Caco-2 (cell line): ENCODE measurements at regions of chr7 and their contacts with region 1.

Region 1: DNA sequence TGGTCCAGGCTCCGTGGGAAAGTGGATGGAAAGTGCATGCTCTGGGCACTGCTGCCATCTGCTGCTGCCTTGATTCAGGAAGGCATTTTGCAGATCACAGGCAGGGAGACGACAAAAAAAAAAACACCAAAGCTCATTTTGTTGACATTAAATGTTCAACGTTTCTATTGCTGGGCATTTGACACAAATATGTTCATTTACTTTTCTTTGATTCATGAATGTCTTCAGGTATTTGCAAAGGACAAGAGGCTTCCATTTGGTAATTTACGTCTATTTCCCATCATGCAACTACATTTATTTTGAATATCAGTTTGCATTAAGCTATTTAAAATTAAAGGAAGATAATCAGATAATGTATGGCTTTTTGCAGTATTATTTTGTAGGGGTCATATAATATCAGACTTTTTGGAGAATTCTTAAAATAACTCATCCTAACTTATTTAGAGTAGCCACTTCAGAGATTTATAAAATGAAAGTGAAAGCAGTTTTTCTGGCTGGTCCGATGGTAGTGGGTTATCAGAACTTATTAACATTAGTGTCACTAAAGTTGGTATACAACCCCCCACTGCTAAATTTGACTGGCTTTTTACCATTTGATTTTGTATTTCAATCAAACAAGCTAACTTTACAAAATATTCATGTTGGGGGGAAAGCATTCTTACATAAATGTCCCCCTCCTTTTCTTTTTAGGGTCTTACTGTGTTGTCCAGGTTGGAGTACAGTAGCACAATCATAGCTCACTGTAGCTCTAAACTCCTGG is 65.3 kb downstream of the PDIA4 start:
- DNase-seq: peak in 1 of 2 experiments; percentile 63
- H3K4me3 ChIP-seq: peak overlapping the region; percentile 67
- H3K4me3 Mint-ChIP-seq: peak overlapping the region; percentile 92
- H3K27ac Mint-ChIP-seq: peak overlapping the region; percentile 70
- H3K4me1 ChIP-seq: peaks cover 10% of the 10 kb centered on the region; the same call in 1 of the 2 replicates
- H3K4me1 Mint-ChIP-seq: peaks cover 18% of the 10 kb centered on the region
- H3K27me3 ChIP-seq: no peaks in the 10 kb centered on the region
- H3K27me3 Mint-ChIP-seq: no peaks in the 10 kb centered on the region
- CTCF ChIP-seq: peak; percentile 64 to 74

Region 2: DNA sequence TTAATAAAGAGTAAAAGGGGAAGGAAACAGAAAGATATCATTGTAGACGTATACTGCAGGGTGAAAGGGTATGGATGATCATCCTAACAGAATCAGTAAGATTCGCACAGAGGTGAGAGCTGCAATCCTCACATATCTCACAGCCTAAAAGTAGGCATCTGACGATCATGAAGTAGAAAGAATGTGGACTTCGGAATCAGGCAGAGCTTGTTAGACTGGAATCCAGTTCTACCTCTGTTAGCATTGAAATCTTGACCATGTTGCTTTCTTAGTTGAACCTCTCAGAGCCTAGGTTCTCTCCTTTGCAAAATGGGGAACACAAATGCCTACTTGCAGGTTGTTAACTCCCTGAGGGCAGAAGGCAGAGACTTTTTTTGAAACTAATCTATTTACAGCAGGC is 692.4 kb before region 1 on chr7:
- CTCF ChIA-PET with region 1: no interaction called
- POLR2A ChIA-PET with region 1: no interaction called
- intact Hi-C with region 1: loop called (anchors 5 kb)
- DNase-seq: peak; percentile 58 to 66
- H3K4me3 ChIP-seq: no peak overlapping the region
- H3K4me3 Mint-ChIP-seq: peak overlapping the region; percentile 49
- H3K27ac Mint-ChIP-seq: peak overlapping the region; percentile 54
- H3K4me1 ChIP-seq: peaks cover 30% of the 10 kb centered on the region
- H3K4me1 Mint-ChIP-seq: peaks cover 26% of the 10 kb centered on the region
- H3K27me3 ChIP-seq: no peaks in the 10 kb centered on the region
- H3K27me3 Mint-ChIP-seq: no peaks in the 10 kb centered on the region
- CTCF ChIP-seq: no peak

Region 3: DNA sequence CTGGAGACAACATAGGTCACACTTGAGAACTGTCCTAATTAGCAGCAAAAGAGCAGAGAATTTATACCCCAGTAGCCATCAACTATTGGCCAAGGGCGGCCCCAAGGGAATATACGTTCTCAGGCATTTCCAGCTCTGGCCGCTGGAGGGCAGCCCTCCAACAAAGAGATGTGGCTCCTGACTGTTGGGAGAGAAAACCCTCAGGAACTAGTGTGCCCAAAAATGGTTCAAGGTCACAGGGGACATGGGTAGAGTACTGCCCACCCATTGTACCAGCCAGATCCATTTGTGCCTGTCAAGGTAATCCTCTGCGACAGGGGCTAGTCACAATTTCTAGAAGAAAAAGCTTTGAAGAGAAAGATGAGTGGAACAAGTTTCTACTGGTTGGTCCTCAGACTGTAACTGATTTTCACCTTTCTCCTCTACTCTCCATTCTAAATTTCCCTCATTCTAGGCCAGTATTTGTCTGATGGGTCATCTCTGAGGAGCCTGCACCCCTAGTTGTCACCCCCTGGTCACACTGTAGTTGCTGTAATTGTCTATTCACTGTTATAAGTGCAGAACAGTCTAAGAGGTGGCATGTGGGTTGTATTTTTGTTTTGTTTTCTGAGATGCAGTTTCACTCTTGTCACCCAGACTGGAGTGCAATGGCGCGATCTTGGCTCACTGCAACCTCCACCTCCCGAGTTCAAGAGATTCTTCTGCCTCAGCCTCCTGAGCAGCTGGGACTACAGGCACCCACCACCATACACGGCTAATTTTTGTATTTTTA is 387.2 kb before region 1 on chr7:
- CTCF ChIA-PET with region 1: interaction called, 6 read pairs
- POLR2A ChIA-PET with region 1: no interaction called
- intact Hi-C with region 1: loop called (anchors 1 kb)
- DNase-seq: peak; percentile 61 to 76
- H3K4me3 ChIP-seq: no peak overlapping the region
- H3K4me3 Mint-ChIP-seq: no peak overlapping the region
- H3K27ac Mint-ChIP-seq: no peak overlapping the region
- H3K4me1 ChIP-seq: no peaks in the 10 kb centered on the region
- H3K4me1 Mint-ChIP-seq: no peaks in the 10 kb centered on the region
- H3K27me3 ChIP-seq: no peaks in the 10 kb centered on the region
- H3K27me3 Mint-ChIP-seq: peaks cover 3% of the 10 kb centered on the region
- CTCF ChIP-seq: peak; percentile 85 to 90

Region 4: GRCh38 chr7:148670807-148671206 is 292.2 kb before region 1 on chr7:
- CTCF ChIA-PET with region 1: no interaction called
- POLR2A ChIA-PET with region 1: no interaction called
- intact Hi-C with region 1: no loop called
- DNase-seq: no peak
- H3K4me3 ChIP-seq: no peak overlapping the region
- H3K4me3 Mint-ChIP-seq: no peak overlapping the region
- H3K27ac Mint-ChIP-seq: no peak overlapping the region
- H3K4me1 ChIP-seq: no peaks in the 10 kb centered on the region
- H3K4me1 Mint-ChIP-seq: no peaks in the 10 kb centered on the region
- H3K27me3 ChIP-seq: no peaks in the 10 kb centered on the region
- H3K27me3 Mint-ChIP-seq: peaks cover 3% of the 10 kb centered on the region
- CTCF ChIP-seq: no peak

Region 5: DNA sequence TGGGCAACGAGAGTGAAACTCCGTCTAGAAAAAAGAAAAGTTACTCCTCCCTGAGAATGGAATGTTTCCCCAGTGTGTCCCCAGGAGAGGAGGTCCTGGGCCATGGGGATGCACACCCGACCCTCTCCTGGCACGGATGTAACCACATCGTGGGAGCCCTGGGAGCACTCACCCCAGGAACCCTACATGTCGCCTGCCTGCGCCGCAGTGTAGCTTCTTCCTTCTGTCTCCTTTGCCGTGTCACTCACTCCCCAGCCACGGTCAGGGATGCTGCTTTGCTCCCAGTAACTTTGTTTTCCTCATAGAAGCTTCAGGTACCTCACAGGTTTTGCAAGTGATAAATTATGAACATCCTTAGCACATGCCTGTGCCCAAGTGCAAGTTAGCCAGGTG is 160.9 kb before region 1 on chr7:
- CTCF ChIA-PET with region 1: no interaction called
- POLR2A ChIA-PET with region 1: no interaction called
- intact Hi-C with region 1: loop called (anchors 2 kb)
- DNase-seq: no peak
- H3K4me3 ChIP-seq: no peak overlapping the region
- H3K4me3 Mint-ChIP-seq: no peak overlapping the region
- H3K27ac Mint-ChIP-seq: no peak overlapping the region
- H3K4me1 ChIP-seq: no peaks in the 10 kb centered on the region
- H3K4me1 Mint-ChIP-seq: no peaks in the 10 kb centered on the region
- H3K27me3 ChIP-seq: no peaks in the 10 kb centered on the region
- H3K27me3 Mint-ChIP-seq: no peaks in the 10 kb centered on the region
- CTCF ChIP-seq: no peak

Region 6: DNA sequence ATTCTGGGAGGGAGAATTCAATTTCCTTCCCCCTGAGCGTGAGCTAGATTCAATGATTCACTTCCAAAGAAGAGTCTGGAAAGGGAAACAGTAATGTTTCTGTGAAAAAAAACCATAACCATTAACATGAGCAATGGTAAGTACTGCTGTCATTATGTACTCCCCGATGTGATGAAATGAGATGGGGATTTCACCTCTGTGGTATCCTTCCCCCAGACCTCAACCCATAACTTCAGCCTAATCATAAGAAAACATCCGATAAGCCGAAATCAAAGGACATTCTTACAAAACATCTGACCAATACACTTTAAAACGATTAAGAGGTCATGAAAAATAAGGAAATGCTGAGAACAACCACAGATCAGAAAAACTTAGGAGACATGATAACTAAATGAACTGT is 106.1 kb before region 1 on chr7:
- CTCF ChIA-PET with region 1: no interaction called
- POLR2A ChIA-PET with region 1: no interaction called
- intact Hi-C with region 1: loop called (anchors 1 kb)
- DNase-seq: no peak
- H3K4me3 ChIP-seq: no peak overlapping the region
- H3K4me3 Mint-ChIP-seq: no peak overlapping the region
- H3K27ac Mint-ChIP-seq: no peak overlapping the region
- H3K4me1 ChIP-seq: no peaks in the 10 kb centered on the region; the same call in 1 of the 2 replicates
- H3K4me1 Mint-ChIP-seq: peaks cover 9% of the 10 kb centered on the region
- H3K27me3 ChIP-seq: no peaks in the 10 kb centered on the region
- H3K27me3 Mint-ChIP-seq: no peaks in the 10 kb centered on the region
- CTCF ChIP-seq: no peak

Region 7: DNA sequence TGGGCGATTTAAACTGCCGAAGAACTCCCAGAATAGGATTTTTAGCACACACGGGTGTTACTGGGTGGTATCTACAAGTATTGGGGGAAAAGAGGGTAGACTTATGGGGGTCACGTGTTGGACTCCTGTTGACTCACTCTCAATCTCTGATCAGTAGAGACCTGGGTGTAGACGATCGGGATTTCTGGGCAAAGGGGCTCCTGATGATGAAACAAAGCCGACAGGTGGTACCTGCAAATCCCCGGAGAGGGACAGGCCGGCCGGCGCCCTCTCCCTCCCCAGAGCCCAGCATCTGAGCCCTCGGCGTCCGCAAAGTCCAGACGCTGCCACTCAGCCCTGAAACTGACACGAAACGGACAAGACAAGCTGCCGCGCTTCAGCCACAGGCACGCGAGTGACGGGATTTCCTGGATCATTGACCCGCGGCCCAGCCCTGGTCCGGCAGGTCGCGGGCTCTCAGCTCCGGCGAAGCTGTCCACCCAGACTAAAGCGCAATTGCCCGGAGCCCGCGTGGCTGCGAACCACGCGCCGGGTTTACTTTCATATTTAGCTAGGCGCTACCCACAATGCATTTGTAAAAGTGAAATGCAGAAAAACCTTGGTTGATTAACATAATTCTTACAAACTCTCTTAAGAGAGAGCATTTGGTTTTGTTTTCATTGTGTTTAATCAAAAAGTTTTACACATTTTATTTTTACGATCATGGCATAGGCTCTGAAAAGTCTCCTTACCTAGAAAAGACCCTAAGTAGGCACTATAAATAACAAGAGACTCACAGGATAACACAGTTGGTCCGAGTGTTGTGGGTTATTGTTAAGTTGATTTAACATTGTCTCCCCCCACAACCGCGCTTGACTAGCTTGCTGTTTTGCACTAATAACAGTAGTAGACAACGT is 22.1 kb before region 1 on chr7:
- CTCF ChIA-PET with region 1: interaction called, 10 read pairs
- POLR2A ChIA-PET with region 1: no interaction called
- intact Hi-C with region 1: loop called (anchors 1 kb)
- DNase-seq: peak; percentile 80 to 81
- H3K4me3 ChIP-seq: peak overlapping the region; percentile 88
- H3K4me3 Mint-ChIP-seq: peak overlapping the region; percentile 87
- H3K27ac Mint-ChIP-seq: peak overlapping the region; percentile 95
- H3K4me1 ChIP-seq: no peaks in the 10 kb centered on the region; the same call in 1 of the 2 replicates
- H3K4me1 Mint-ChIP-seq: peaks cover 7% of the 10 kb centered on the region
- H3K27me3 ChIP-seq: no peaks in the 10 kb centered on the region
- H3K27me3 Mint-ChIP-seq: no peaks in the 10 kb centered on the region
- CTCF ChIP-seq: no peak